A549 (cell line): ENCODE measurements at regions of chr7 and their contacts with region 1.

Region 1: DNA sequence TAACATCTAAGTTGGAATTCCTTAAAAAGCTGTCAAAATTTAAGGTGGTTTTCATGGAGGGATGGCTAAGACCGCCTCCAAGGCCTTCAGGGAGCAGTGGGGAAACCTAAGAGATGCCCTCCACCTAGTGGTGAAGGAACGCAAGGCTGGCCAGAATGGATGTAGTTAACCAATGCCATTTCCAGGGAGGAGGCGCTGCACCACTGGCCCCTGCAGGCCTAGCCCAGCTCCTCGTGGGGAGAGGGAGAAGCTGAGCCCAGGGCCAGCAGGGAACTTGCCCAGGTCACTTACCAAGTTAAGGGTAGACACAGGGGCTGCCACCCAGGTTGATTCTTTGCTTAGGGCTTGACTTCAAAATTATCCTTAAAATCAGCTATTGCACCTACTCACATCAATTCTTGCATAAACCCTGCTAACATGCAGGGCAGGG is 32.0 kb downstream of the FIGNL1 start:
- DNase-seq: peak; percentile 69 to 83
- ATAC-seq: peak; percentile 99 to 100
- H3K4me3 ChIP-seq: no peak overlapping the region
- H3K27ac ChIP-seq: no peak overlapping the region
- H3K4me1 ChIP-seq: no peaks in the 10 kb centered on the region
- CTCF ChIP-seq: peak; percentile 86
- EP300 ChIP-seq: no peak
- POLR2A ChIP-seq: no peak
- RAD21 ChIP-seq: peak; percentile 81 to 85

Region 2: GRCh38 chr7:50092579-50093491 is 325.3 kb before region 1 on chr7 and contains the start of gene ZPBP:
- CTCF ChIA-PET with region 1: interaction called, 24 read pairs
- POLR2A ChIA-PET with region 1: no interaction called
- DNase-seq: peak in 1 of 2 experiments; percentile 32
- ATAC-seq: peak in 1 of 2 experiments; percentile 38; a peak in 3 of 6 replicates
- H3K4me3 ChIP-seq: no peak within 1 kb of the TSS
- H3K27ac ChIP-seq: no peak within 1 kb of the TSS
- H3K4me1 ChIP-seq: no peaks in the 10 kb centered on the region
- CTCF ChIP-seq: peak; percentile 80
- EP300 ChIP-seq: no peak
- POLR2A ChIP-seq: no peak
- RAD21 ChIP-seq: peak; percentile 78 to 81
- polyA plus RNA-seq, gene ZPBP: not detected in 2 replicates

Region 3: GRCh38 chr7:50142425-50143017 is 275.6 kb before region 1 on chr7:
- CTCF ChIA-PET with region 1: interaction called, 15 read pairs
- POLR2A ChIA-PET with region 1: no interaction called
- DNase-seq: peak in 1 of 2 experiments; percentile 40
- ATAC-seq: peak in 1 of 2 experiments; percentile 53; a peak in 2 of 6 replicates
- H3K4me3 ChIP-seq: no peak overlapping the region; the same call in 2 of the 3 replicates
- H3K27ac ChIP-seq: no peak overlapping the region
- H3K4me1 ChIP-seq: no peaks in the 10 kb centered on the region; the same call in 2 of the 3 replicates
- CTCF ChIP-seq: peak; percentile 69
- EP300 ChIP-seq: no peak
- POLR2A ChIP-seq: no peak
- RAD21 ChIP-seq: peak; percentile 56 to 67

Region 4: GRCh38 chr7:50147951-50148808 is 269.9 kb before region 1 on chr7:
- CTCF ChIA-PET with region 1: interaction called, 15 read pairs
- POLR2A ChIA-PET with region 1: no interaction called
- DNase-seq: no peak
- ATAC-seq: no peak
- H3K4me3 ChIP-seq: no peak overlapping the region
- H3K27ac ChIP-seq: no peak overlapping the region
- H3K4me1 ChIP-seq: no peaks in the 10 kb centered on the region
- CTCF ChIP-seq: no peak
- EP300 ChIP-seq: no peak
- POLR2A ChIP-seq: no peak
- RAD21 ChIP-seq: no peak

Region 5: GRCh38 chr7:50206453-50207250 is 211.4 kb before region 1 on chr7:
- CTCF ChIA-PET with region 1: interaction called, 35 read pairs
- POLR2A ChIA-PET with region 1: no interaction called
- DNase-seq: no peak
- ATAC-seq: 0 out of 6 replicates have a peak, but pooled peaks of 1 of the 2 experiments have one; percentile 45
- H3K4me3 ChIP-seq: no peak overlapping the region
- H3K27ac ChIP-seq: no peak overlapping the region
- H3K4me1 ChIP-seq: no peaks in the 10 kb centered on the region
- CTCF ChIP-seq: no peak
- EP300 ChIP-seq: no peak
- POLR2A ChIP-seq: no peak
- RAD21 ChIP-seq: no peak

Region 6: DNA sequence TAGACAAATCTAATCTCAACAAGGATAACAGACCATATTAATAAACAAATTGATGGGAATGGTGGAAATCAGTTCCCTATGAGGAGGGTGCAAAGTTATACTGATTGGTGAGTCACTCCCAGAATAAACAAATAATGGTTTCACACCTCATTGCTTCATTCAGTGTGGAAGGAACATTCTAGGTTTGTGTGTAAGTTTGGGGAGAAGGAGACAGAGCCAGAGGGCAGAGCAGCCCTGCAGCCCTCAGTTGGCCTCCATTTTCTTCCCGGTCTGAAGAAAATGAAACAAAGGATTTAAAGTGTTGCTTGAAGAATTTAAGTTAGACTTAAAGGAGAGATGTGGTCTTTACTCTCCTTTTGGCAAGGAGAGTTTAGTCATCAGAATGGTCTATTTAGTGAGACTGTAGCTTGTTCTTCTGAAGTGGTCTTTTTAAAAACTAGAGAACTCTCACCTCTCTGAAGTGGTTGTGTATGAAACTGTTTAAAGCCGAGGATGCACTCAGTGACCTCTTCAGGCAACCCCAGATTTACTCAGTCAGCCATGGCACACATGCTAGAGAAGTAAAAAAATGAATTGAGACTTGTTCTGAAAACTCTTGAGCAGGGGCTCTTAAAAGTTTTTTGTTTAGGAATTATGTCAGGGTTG is 86.4 kb before region 1 on chr7:
- CTCF ChIA-PET with region 1: no interaction called
- POLR2A ChIA-PET with region 1: no interaction called
- DNase-seq: no peak
- ATAC-seq: no peak
- H3K4me3 ChIP-seq: no peak overlapping the region
- H3K27ac ChIP-seq: no peak overlapping the region
- H3K4me1 ChIP-seq: no peaks in the 10 kb centered on the region
- CTCF ChIP-seq: no peak
- EP300 ChIP-seq: no peak
- POLR2A ChIP-seq: no peak
- RAD21 ChIP-seq: no peak

Region 7: GRCh38 chr7:50404392-50404791 is 13.7 kb before region 1 on chr7:
- CTCF ChIA-PET with region 1: interaction called, 24 read pairs
- POLR2A ChIA-PET with region 1: no interaction called
- DNase-seq: peak in 1 of 2 experiments; percentile 9
- ATAC-seq: peak; percentile 73 to 86; a peak in 5 of 6 replicates
- H3K4me3 ChIP-seq: no peak overlapping the region
- H3K27ac ChIP-seq: no peak overlapping the region
- H3K4me1 ChIP-seq: no peaks in the 10 kb centered on the region
- CTCF ChIP-seq: no peak
- EP300 ChIP-seq: no peak
- POLR2A ChIP-seq: no peak
- RAD21 ChIP-seq: no peak

Region 8: DNA sequence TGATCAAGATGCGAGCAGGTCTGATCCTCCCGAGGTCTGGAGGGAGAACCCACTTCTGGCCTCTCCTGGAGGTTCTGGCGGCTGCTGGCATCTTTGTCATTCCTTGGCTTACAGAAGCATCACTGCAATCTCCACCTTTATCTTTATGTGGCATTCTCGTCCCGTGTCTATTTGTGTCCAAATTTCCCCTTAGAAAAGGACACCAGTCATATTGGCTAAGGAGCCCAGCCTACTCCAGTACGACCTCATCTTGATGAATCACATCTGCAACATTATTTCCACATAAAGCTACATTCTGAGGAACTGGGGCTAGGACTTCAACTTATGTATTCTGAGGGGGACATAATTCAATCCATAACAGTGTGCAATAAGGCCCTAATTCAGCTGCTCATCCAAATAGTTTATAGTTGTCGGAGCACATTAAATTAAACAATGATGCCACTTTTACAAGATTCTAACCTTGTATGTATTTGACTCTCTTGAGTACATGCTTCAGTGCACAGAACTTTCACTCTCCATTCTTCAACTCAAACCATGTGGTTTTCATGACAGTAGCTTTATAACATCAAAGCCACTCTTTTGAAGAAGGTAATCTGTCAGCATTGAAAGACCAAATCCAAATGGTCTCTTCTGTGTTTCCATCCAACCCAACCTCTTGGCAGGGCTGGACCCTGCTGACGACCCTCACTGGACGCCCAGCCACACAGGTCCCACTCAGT is 233.3 kb after region 1 on chr7:
- CTCF ChIA-PET with region 1: no interaction called
- POLR2A ChIA-PET with region 1: no interaction called
- DNase-seq: no peak
- ATAC-seq: no peak
- H3K4me3 ChIP-seq: no peak overlapping the region
- H3K27ac ChIP-seq: no peak overlapping the region
- H3K4me1 ChIP-seq: no peaks in the 10 kb centered on the region
- CTCF ChIP-seq: no peak
- EP300 ChIP-seq: no peak
- POLR2A ChIP-seq: no peak
- RAD21 ChIP-seq: no peak